ENCODE measurements at regions of chr9 and their contacts with region 1.

Region 1: DNA sequence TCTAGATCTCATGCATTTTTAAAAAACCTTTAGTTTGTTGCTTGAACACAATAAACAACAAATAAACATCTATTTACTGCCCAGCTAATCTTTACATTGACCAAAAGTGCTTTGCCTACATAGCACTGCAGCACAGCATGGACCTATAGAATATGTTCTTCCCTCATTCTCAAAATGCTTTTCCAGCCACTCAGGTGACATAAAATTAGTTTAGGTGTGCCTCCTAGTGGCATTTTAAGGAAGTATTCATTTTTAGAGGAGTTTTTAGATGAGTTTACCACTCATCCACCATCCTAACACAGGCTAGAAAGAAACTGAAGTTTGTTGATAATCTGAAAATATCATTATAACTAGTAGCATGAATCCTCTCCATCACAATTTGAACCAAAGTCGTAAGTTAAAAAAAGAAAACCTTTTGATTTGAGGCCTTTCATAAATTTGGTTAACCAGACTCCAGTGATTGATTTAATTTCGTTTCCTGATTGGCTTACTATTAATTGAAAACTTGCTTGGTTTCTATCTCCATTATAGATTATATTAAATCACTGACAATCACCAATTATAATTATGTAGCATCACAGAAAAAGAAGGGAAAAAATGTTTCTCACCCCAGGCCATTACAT is 12.6 kb downstream of the PLGRKT start:
- DNase-seq: peak in 2 of 9 experiments; percentile 56 to 65
- ATAC-seq: peak; percentile 59
- H3K4me3 ChIP-seq: no peak overlapping the region
- H3K4me3 Mint-ChIP-seq: no peak overlapping the region
- H3K27ac ChIP-seq: no peak overlapping the region
- H3K27ac Mint-ChIP-seq: no peak overlapping the region
- H3K4me1 ChIP-seq: no peaks in the 10 kb centered on the region
- H3K4me1 Mint-ChIP-seq: peaks cover 9% of the 10 kb centered on the region
- H3K27me3 ChIP-seq: no peaks in the 10 kb centered on the region
- H3K27me3 Mint-ChIP-seq: no peaks in the 10 kb centered on the region
- CTCF ChIP-seq: peak; percentile 88

Region 2: DNA sequence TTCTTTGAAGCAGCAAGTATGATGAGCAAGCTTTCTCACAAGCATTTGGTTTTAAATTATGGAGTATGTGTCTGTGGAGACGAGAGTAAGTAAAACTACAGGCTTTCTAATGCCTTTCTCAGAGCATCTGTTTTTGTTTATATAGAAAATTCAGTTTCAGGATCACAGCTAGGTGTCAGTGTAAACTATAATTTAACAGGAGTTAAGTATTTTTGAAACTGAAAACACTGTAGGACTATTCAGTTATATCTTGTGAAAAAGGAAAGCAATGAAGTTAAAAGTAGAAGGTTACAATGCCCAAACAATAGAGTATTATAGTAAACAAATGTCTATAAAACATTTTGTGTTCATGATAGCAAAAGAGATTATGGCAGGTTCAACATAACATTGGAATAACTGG is 351.4 kb before region 1 on chr9:
- CTCF ChIA-PET with region 1: no interaction called
- POLR2A ChIA-PET with region 1: no interaction called
- intact Hi-C with region 1: loop called in 1 of 2 experiments (anchors 10 kb)
- DNase-seq: no peak
- ATAC-seq: no peak
- H3K4me3 ChIP-seq: no peak overlapping the region
- H3K4me3 Mint-ChIP-seq: no peak overlapping the region
- H3K27ac ChIP-seq: no peak overlapping the region
- H3K27ac Mint-ChIP-seq: no peak overlapping the region
- H3K4me1 ChIP-seq: no peaks in the 10 kb centered on the region
- H3K4me1 Mint-ChIP-seq: no peaks in the 10 kb centered on the region
- H3K27me3 ChIP-seq: no peaks in the 10 kb centered on the region
- H3K27me3 Mint-ChIP-seq: no peaks in the 10 kb centered on the region
- CTCF ChIP-seq: no peak

Region 3: GRCh38 chr9:5268890-5269715 is 156.0 kb before region 1 on chr9:
- CTCF ChIA-PET with region 1: no interaction called
- POLR2A ChIA-PET with region 1: no interaction called
- intact Hi-C with region 1: no loop called
- DNase-seq: no peak
- ATAC-seq: no peak
- H3K4me3 ChIP-seq: no peak overlapping the region
- H3K4me3 Mint-ChIP-seq: no peak overlapping the region
- H3K27ac ChIP-seq: no peak overlapping the region
- H3K27ac Mint-ChIP-seq: no peak overlapping the region
- H3K4me1 ChIP-seq: peaks cover 4% of the 10 kb centered on the region
- H3K4me1 Mint-ChIP-seq: peaks cover 10% of the 10 kb centered on the region
- H3K27me3 ChIP-seq: no peaks in the 10 kb centered on the region
- H3K27me3 Mint-ChIP-seq: no peaks in the 10 kb centered on the region
- CTCF ChIP-seq: no peak

Region 4: DNA sequence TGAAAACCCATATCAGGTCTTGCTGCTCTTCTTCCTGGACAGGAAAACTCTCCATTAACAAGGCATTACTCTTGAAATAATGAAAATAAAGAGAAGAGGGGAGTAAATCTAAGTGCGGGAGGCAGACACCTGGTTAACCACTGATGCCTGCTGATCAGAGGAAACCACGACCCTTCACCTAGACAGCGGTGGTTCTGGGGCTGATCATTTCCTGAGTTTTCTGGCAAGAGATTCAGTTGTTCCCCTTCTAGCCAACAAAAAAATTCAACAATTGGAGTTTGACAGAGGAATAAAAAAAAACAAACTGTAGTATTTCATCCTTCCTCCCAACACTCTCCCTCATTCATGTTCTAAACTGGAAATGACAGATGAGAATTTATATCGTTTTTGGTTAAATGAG is 123.6 kb before region 1 on chr9:
- CTCF ChIA-PET with region 1: no interaction called
- POLR2A ChIA-PET with region 1: no interaction called
- intact Hi-C with region 1: loop called (anchors 10 kb)
- DNase-seq: peak in 3 of 9 experiments; percentile 23 to 43 (median 26)
- ATAC-seq: no peak
- H3K4me3 ChIP-seq: no peak overlapping the region
- H3K4me3 Mint-ChIP-seq: peak overlapping the region; percentile 58
- H3K27ac ChIP-seq: no peak overlapping the region
- H3K27ac Mint-ChIP-seq: peak overlapping the region; percentile 45
- H3K4me1 ChIP-seq: peaks cover 15% of the 10 kb centered on the region
- H3K4me1 Mint-ChIP-seq: peaks cover 26% of the 10 kb centered on the region
- H3K27me3 ChIP-seq: no peaks in the 10 kb centered on the region
- H3K27me3 Mint-ChIP-seq: no peaks in the 10 kb centered on the region
- CTCF ChIP-seq: no peak

Measured in CD8-positive, alpha-beta T cell (primary cell).